Caco-2 (cell line): ENCODE measurements at regions of chr16 and their contacts with region 1.

Region 1: GRCh38 chr16:53945996-53946395 is 242.0 kb downstream of the FTO start:
- DNase-seq: peak in 1 of 2 experiments; percentile 65
- H3K4me3 ChIP-seq: no peak overlapping the region
- H3K4me3 Mint-ChIP-seq: no peak overlapping the region
- H3K27ac Mint-ChIP-seq: no peak overlapping the region
- H3K4me1 ChIP-seq: peaks cover 14% of the 10 kb centered on the region
- H3K4me1 Mint-ChIP-seq: peaks cover 7% of the 10 kb centered on the region
- H3K27me3 ChIP-seq: no peaks in the 10 kb centered on the region
- H3K27me3 Mint-ChIP-seq: no peaks in the 10 kb centered on the region
- CTCF ChIP-seq: peak; percentile 69 to 87

Region 2: DNA sequence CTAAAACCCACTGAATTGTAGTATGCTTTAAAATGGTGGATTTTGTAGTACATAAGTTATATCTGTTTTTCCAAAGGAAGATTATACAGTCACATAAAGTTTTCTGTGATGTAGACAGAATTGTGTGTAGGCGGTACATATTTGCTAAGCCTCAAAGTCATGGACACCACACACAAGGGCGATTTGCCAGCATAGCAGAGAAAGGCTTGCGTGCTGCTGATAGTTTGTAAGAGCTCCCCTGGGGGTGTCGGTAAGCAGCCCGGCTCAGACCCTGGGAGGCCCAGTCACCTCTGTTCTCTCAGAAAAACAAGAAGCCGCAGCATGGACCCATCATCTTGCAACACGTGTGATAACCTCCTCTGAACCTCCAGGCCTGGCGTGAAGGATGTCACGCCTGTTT is 404.7 kb before region 1 on chr16:
- CTCF ChIA-PET with region 1: no interaction called
- POLR2A ChIA-PET with region 1: no interaction called
- intact Hi-C with region 1: no loop called
- DNase-seq: no peak
- H3K4me3 ChIP-seq: no peak overlapping the region
- H3K4me3 Mint-ChIP-seq: no peak overlapping the region
- H3K27ac Mint-ChIP-seq: no peak overlapping the region
- H3K4me1 ChIP-seq: no peaks in the 10 kb centered on the region
- H3K4me1 Mint-ChIP-seq: no peaks in the 10 kb centered on the region
- H3K27me3 ChIP-seq: no peaks in the 10 kb centered on the region
- H3K27me3 Mint-ChIP-seq: no peaks in the 10 kb centered on the region
- CTCF ChIP-seq: no peak

Region 3: GRCh38 chr16:54135951-54136625 is 190.1 kb after region 1 on chr16:
- CTCF ChIA-PET with region 1: no interaction called
- POLR2A ChIA-PET with region 1: no interaction called
- intact Hi-C with region 1: no loop called
- DNase-seq: no peak
- H3K4me3 ChIP-seq: no peak overlapping the region
- H3K4me3 Mint-ChIP-seq: no peak overlapping the region
- H3K27ac Mint-ChIP-seq: no peak overlapping the region
- H3K4me1 ChIP-seq: 0 out of 2 replicates have a peak, but pooled peaks cover 4% of the 10 kb centered on the region
- H3K4me1 Mint-ChIP-seq: no peaks in the 10 kb centered on the region
- H3K27me3 ChIP-seq: no peaks in the 10 kb centered on the region
- H3K27me3 Mint-ChIP-seq: no peaks in the 10 kb centered on the region
- CTCF ChIP-seq: no peak

Region 4: GRCh38 chr16:54817446-54817845 is 871.5 kb after region 1 on chr16:
- CTCF ChIA-PET with region 1: no interaction called
- POLR2A ChIA-PET with region 1: no interaction called
- intact Hi-C with region 1: loop called (anchors 10 kb)
- DNase-seq: peak in 1 of 2 experiments; percentile 35
- H3K4me3 ChIP-seq: no peak overlapping the region
- H3K4me3 Mint-ChIP-seq: no peak overlapping the region
- H3K27ac Mint-ChIP-seq: peak overlapping the region; percentile 82
- H3K4me1 ChIP-seq: peaks cover 20% of the 10 kb centered on the region
- H3K4me1 Mint-ChIP-seq: peaks cover 23% of the 10 kb centered on the region
- H3K27me3 ChIP-seq: no peaks in the 10 kb centered on the region
- H3K27me3 Mint-ChIP-seq: no peaks in the 10 kb centered on the region
- CTCF ChIP-seq: peak; percentile 38 to 72